GM12878 (cell line): ENCODE measurements at regions of chr14 and their contacts with region 1.

Region 1: GRCh38 chr14:81550001-81550637 is 16.5 kb upstream of the SEL1L start:
- DNase-seq: peak; percentile 81
- ATAC-seq: peak; percentile 97
- H3K4me3 ChIP-seq: peak overlapping the region; percentile 40; the same call in 1 of the 2 replicates
- H3K27ac ChIP-seq: peak overlapping the region; percentile 21
- H3K4me1 ChIP-seq: peaks cover 10% of the 10 kb centered on the region
- H3K27me3 ChIP-seq: no peaks in the 10 kb centered on the region
- CTCF ChIP-seq: no peak
- EP300 ChIP-seq: peak; percentile 61 to 93; a peak in 3 of 4 replicates
- POLR2A ChIP-seq: no peak
- RAD21 ChIP-seq: no peak

Region 2: GRCh38 chr14:81303248-81304221 is 246.6 kb before region 1 on chr14:
- CTCF ChIA-PET with region 1: no interaction called
- POLR2A ChIA-PET with region 1: no interaction called
- RAD21 ChIA-PET with region 1: no interaction called
- SMC1A ChIA-PET with region 1: no interaction called
- in situ Hi-C with region 1: no loop called
- intact Hi-C with region 1: loop called (anchors 1 kb)
- DNase-seq: peak; percentile 41
- ATAC-seq: peak; percentile 94
- H3K4me3 ChIP-seq: no peak overlapping the region
- H3K27ac ChIP-seq: no peak overlapping the region
- H3K4me1 ChIP-seq: peaks cover 7% of the 10 kb centered on the region
- H3K27me3 ChIP-seq: no peaks in the 10 kb centered on the region
- CTCF ChIP-seq: no peak
- EP300 ChIP-seq: peak in 1 of 2 experiments; percentile 58; a peak in 1 of 4 replicates
- POLR2A ChIP-seq: no peak
- RAD21 ChIP-seq: no peak

Region 3: GRCh38 chr14:81565441-81566290 is 15.5 kb after region 1 on chr14:
- CTCF ChIA-PET with region 1: interaction called, 11 read pairs
- POLR2A ChIA-PET with region 1: no interaction called
- RAD21 ChIA-PET with region 1: no interaction called
- SMC1A ChIA-PET with region 1: interaction called, 3 read pairs
- in situ Hi-C with region 1: no loop called
- intact Hi-C with region 1: no loop called
- DNase-seq: no peak
- ATAC-seq: peak; percentile 81
- H3K4me3 ChIP-seq: no peak overlapping the region
- H3K27ac ChIP-seq: no peak overlapping the region
- H3K4me1 ChIP-seq: no peaks in the 10 kb centered on the region
- H3K27me3 ChIP-seq: peaks cover 0 to 2% of the 10 kb centered on the region in 2 experiments; a peak in 2 of 4 replicates
- CTCF ChIP-seq: peak; percentile 64 to 71 (median 70); a peak in 5 of 6 replicates
- EP300 ChIP-seq: no peak
- POLR2A ChIP-seq: no peak
- RAD21 ChIP-seq: peak; percentile 79